Heart left ventricle (tissue), 16 donors: ENCODE measurements at regions of chr22 and their contacts with region 1.

Region 1: GRCh38 chr22:39123751-39124601 is 26.9 kb downstream of the APOBEC3H start:
- DNase-seq: no peak
- ATAC-seq: peak in 1 of 4 donors; percentile 48
- H3K4me3 ChIP-seq: no peak overlapping the region
- H3K27ac ChIP-seq: no peak overlapping the region
- H3K4me1 ChIP-seq: peaks cover 0 to 4% (median 0%) of the 10 kb centered on the region in 12 donors
- H3K27me3 ChIP-seq: no peaks in the 10 kb centered on the region
- CTCF ChIP-seq: no peak
- POLR2A ChIP-seq: no peak

Region 2: GRCh38 chr22:39003165-39003638 is 120.8 kb before region 1 on chr22:
- intact Hi-C with region 1: loop called in 9 of 10 experiments (anchors 2 to 5 kb)
- DNase-seq: peak; percentile 67 to 81 (median 75)
- ATAC-seq: peak; percentile 81 to 94 (median 92)
- H3K4me3 ChIP-seq: no peak overlapping the region
- H3K27ac ChIP-seq: no peak overlapping the region
- H3K4me1 ChIP-seq: peaks cover 0 to 12% (median 1%) of the 10 kb centered on the region in 12 donors
- H3K27me3 ChIP-seq: peaks cover 0 to 5% (median 0%) of the 10 kb centered on the region in 9 donors
- CTCF ChIP-seq: peak; percentile 63 to 86 (median 75)
- POLR2A ChIP-seq: no peak

Region 3: DNA sequence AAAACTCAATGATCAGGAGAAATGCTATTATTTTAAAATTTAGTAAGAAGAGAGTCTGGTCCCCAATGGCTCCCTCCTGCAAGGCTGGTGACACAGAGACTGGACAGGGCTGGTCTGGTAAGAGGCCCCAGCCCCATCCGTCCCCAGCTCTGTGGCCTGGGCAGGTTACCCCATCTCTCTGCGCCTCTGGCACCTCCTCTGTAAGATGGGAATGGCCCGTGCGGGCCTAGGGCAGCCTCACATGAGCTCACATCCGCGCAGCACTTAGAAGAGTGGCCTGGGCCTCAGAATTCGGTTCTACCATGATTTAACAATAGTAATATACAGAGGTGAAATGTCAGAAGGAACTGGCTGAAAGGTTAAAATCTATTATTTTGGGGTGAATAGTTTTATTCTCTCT is 82.1 kb before region 1 on chr22:
- intact Hi-C with region 1: no loop called
- DNase-seq: no peak
- ATAC-seq: no peak
- H3K4me3 ChIP-seq: peak overlapping the region in 4 of 12 donors; percentile 67 to 89 (median 74)
- H3K27ac ChIP-seq: no peak overlapping the region
- H3K4me1 ChIP-seq: peaks cover 0 to 21% (median 8%) of the 10 kb centered on the region in 12 donors
- H3K27me3 ChIP-seq: no peaks in the 10 kb centered on the region
- CTCF ChIP-seq: no peak
- POLR2A ChIP-seq: no peak

Region 4: GRCh38 chr22:39195436-39195835 is 71.5 kb after region 1 on chr22:
- intact Hi-C with region 1: no loop called
- DNase-seq: peak in 1 of 5 donors; percentile 3
- ATAC-seq: no peak
- H3K4me3 ChIP-seq: no peak overlapping the region
- H3K27ac ChIP-seq: no peak overlapping the region
- H3K4me1 ChIP-seq: no peaks in the 10 kb centered on the region
- H3K27me3 ChIP-seq: no peaks in the 10 kb centered on the region
- CTCF ChIP-seq: no peak
- POLR2A ChIP-seq: no peak

Region 5: GRCh38 chr22:39283322-39284004 is 159.5 kb after region 1 on chr22:
- intact Hi-C with region 1: no loop called
- DNase-seq: peak; percentile 70 to 84 (median 76)
- ATAC-seq: peak; percentile 51 to 82 (median 73)
- H3K4me3 ChIP-seq: no peak overlapping the region
- H3K27ac ChIP-seq: peak overlapping the region; percentile 46 to 88 (median 78)
- H3K4me1 ChIP-seq: peaks cover 5 to 79% (median 30%) of the 10 kb centered on the region in 12 donors
- H3K27me3 ChIP-seq: no peaks in the 10 kb centered on the region
- CTCF ChIP-seq: no peak
- POLR2A ChIP-seq: no peak

Region 6: DNA sequence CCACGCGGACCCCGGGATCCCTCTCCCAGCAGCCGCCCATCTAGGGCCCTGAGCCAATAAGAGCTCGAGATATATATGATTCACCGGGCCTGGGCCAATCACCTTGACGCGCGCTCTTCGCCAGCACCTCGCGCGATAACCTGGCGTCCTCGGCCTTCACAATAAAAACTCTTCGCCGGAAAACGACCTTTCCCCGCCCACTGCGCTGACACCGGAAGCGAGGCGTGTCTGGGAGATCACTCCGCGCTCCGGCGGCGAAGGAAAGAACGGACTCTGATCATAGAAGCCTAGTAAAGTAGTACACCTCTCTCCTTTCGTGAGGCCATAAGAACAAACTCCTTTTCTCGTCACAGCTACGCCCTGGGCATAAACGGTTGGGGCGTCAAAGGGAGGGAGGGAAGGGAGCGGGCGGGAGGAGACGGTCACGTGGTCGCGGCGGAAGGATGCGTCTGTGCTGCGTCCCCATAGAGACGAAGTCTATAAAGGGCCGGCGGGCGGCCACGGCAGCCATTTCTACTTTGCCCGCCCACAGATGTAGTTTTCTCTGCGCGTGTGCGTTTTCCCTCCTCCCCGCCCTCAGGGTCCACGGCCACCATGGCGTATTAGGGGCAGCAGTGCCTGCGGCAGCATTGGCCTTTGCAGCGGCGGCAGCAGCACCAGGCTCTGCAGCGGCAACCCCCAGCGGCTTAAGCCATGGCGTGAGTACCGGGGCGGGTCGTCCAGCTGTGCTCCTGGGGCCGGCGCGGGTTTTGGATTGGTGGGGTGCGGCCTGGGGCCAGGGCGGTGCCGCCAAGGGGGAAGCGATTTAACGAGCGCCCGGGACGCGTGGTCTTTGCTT is 396.3 kb after region 1 on chr22 and contains the start of gene ATF4:
- intact Hi-C with region 1: no loop called
- DNase-seq: peak; percentile 98 to 99 (median 98)
- ATAC-seq: peak; percentile 82 to 92 (median 88)
- H3K4me3 ChIP-seq: peak within 1 kb of the TSS; percentile 71 to 100 (median 96)
- H3K27ac ChIP-seq: peak within 1 kb of the TSS; percentile 97 to 100 (median 100)
- H3K4me1 ChIP-seq: peaks cover 0 to 56% (median 50%) of the 10 kb centered on the region in 12 donors
- H3K27me3 ChIP-seq: no peaks in the 10 kb centered on the region
- CTCF ChIP-seq: no peak
- POLR2A ChIP-seq: peak; percentile 83 to 97
- total RNA-seq, gene ATF4: 117 to 322 (median 168) TPM